ENCODE measurements at regions of chr6 and their contacts with region 1.

Region 1: GRCh38 chr6:20802596-20802995 is 268.3 kb downstream of the CDKAL1 start:
- DNase-seq: no peak
- H3K4me3 ChIP-seq: no peak overlapping the region
- H3K27ac ChIP-seq: no peak overlapping the region
- H3K4me1 ChIP-seq: peaks cover 0 to 3% (median 0%) of the 10 kb centered on the region in 4 donors
- H3K27me3 ChIP-seq: no peaks in the 10 kb centered on the region
- CTCF ChIP-seq: no peak
- EP300 ChIP-seq: no peak
- POLR2A ChIP-seq: no peak

Region 2: DNA sequence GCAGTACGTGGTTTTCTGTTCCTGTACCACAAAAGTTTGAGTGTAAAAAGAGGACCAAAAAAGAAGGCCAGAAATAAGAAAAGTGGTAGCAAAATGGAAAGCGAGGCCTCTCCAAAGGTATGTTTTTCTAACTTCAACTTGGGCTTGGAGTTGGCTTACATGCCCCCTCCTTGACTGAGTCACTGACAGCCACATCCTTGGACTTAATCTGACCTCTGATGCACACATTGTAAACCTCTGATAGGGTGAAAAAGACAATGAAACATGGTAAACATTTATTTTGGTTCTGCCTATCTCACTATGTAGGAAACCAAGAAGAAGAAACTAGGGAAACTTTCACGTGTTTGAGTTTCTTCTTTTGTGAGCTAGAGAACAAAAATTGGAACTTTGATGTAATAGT is 1468.7 kb before region 1 on chr6:
- intact Hi-C with region 1: no loop called
- DNase-seq: no peak
- H3K4me3 ChIP-seq: no peak overlapping the region
- H3K27ac ChIP-seq: no peak overlapping the region
- H3K4me1 ChIP-seq: peaks cover 0 to 8% (median 3%) of the 10 kb centered on the region in 4 donors
- H3K27me3 ChIP-seq: no peaks in the 10 kb centered on the region
- CTCF ChIP-seq: no peak
- EP300 ChIP-seq: no peak
- POLR2A ChIP-seq: no peak

Region 3: DNA sequence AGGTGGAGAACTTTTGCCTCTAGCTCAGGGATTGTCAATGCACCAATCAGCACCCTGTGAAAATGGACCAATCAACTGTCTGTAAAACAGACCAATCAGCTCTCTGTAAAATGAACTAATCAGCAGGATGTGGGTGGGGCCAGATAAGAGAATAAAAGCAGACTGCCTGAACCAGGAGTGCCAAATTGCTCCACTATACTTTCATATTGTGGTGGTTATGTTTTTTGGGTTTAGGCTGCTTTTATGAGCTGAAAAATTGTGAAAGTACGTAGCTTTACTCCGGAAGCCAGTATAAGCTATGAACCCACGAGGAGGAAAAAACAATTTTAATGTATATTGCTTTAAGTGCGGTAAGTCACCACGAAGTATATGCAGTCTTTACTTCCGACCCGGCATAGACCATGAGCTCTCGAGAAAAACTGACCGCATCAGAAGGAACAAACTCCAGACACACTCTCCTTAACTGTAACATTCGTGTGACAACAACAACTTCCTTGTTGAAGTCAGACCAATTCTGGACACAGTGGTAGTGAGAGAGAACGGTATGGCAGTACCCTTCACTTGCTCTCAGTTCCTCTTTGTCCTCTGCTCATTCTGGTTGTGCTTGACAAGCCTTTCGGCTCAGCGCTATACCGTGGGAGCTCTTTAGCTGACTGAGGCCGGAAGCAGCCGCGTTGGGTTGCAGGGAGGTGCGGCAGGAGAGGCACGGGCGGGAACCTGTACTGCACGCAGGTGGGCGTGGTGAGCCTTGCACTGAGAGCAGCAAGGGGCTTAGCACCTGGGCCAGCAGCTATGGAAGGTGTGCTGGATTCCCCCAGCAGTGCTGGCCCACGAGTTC is 482.9 kb before region 1 on chr6:
- intact Hi-C with region 1: loop called (anchors 5 kb)
- DNase-seq: no peak
- H3K4me3 ChIP-seq: peak overlapping the region in 2 of 4 donors; percentile 3 to 22
- H3K27ac ChIP-seq: no peak overlapping the region
- H3K4me1 ChIP-seq: no peaks in the 10 kb centered on the region
- H3K27me3 ChIP-seq: peaks cover 0 to 8% (median 0%) of the 10 kb centered on the region in 4 donors
- CTCF ChIP-seq: no peak
- EP300 ChIP-seq: no peak
- POLR2A ChIP-seq: no peak

Measured in esophagus muscularis mucosa (tissue), 4 donors.